ENCODE measurements at regions of chr1 and their contacts with region 1.

Region 1: DNA sequence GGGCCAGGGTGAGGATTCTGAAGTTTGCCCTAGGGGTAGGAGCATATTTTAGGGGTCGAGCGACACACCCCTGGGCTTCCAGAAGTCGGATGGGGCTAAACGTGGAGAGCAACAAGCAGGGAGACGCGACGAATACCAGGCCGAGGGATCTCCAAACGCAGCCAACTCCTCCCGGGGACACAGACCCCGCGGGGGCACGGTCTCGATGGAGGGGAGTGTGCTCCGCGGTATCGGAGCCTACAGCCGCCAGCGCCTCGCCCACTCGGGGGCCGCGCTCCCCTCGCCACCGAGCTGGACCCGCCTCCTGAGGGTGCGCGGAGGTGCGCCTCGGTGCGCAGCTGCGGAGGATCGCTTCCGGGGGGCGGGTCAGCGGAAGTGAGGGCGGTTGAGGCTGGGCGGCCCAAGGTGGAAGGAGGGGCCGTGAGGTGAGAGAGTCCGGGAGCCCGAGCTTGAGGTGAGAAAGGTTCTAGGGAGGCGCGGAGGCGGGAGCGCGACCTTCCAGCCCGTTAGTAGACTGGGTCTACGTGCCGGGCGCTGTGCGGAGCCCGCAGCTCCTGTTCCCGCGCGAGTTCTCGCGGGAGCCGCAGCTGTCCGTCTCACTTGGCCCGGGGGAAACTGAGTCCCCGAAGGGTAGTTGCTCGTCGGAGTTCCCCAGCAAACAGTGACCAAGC is at the start of gene MTFR1L:
- DNase-seq: peak; percentile 98
- H3K4me3 ChIP-seq: peak within 1 kb of the TSS; percentile 77 to 98 (median 92)
- H3K27ac ChIP-seq: peak within 1 kb of the TSS; percentile 82 to 96 (median 93)
- H3K4me1 ChIP-seq: peaks cover 16 to 57% (median 39%) of the 10 kb centered on the region in 6 donors
- H3K27me3 ChIP-seq: no peaks in the 10 kb centered on the region
- CTCF ChIP-seq: no peak
- POLR2A ChIP-seq: peak in 2 of 3 donors; percentile 70 to 81
- total RNA-seq, gene MTFR1L: 44.6 to 74.7 (median 53.7) TPM

Region 2: DNA sequence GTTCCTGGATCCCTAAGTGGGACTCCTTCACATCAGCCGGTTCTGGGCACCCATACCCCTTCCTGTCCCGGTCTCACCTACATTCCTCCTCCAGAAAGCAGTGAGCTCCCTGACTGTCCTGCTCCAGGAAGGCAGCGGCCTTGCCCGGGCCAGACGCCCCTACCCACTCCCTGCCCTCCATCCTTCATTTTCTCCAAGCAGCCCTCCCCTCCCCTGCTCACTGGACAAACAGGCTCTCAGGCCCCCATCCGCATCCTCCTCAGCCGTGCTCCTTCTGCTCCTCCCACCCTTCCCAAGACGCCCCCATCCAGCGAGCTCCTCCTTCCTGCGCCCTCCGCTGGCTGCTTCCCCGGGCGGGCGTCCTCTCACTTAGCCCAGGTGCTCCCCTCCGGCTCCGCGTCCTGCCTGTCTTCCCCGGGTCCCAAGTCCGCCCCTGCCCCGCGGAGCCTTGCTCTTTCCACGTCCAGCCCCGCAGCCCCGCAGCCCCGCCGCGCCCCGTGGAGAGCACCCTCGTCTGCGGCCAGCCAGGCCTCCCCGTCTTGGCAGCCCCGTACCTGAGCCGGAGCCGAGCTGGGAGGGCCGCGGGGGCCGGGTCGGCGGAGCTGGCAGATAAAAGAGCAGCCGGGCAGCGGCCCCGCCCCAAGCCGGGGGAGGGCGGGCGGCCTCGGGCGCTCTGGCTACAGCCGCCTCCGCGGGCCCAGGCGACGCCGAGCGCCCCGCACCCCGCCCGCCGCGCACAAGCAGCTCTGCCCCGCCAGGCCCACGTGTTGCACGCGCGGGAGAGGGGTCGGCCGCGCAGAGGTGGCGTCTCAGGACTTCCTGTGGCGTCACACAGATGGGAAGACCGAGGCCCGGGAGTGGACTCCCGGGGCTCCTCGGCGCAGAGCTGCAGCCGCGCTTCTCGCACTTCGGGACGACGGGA is 55.5 kb after region 1 on chr1 and contains the start of gene PAQR7:
- intact Hi-C with region 1: loop called (anchors 10 kb)
- DNase-seq: peak; percentile 93
- H3K4me3 ChIP-seq: peak within 1 kb of the TSS; percentile 44 to 85 (median 59)
- H3K27ac ChIP-seq: peak within 1 kb of the TSS; percentile 63 to 87 (median 84)
- H3K4me1 ChIP-seq: peaks cover 32 to 79% (median 65%) of the 10 kb centered on the region in 6 donors
- H3K27me3 ChIP-seq: no peaks in the 10 kb centered on the region
- CTCF ChIP-seq: peak in 1 of 11 experiments; percentile 17
- POLR2A ChIP-seq: peak in 1 of 3 donors; percentile 11
- total RNA-seq, gene PAQR7: 9.2 to 14.2 (median 11.9) TPM

Measured in spleen (tissue), 13 donors.